WTC11 (cell line): ENCODE measurements at regions of chr20 and their contacts with region 1.

Region 1: GRCh38 chr20:40471261-40471629 is 217.8 kb downstream of the MAFB start:
- DNase-seq: peak; percentile 47
- ATAC-seq: peak; percentile 98
- H3K4me3 Mint-ChIP-seq: no peak overlapping the region
- H3K27ac Mint-ChIP-seq: no peak overlapping the region; the same call in 1 of the 2 replicates
- H3K4me1 Mint-ChIP-seq: peaks cover 25% of the 10 kb centered on the region
- H3K27me3 Mint-ChIP-seq: peaks cover 3% of the 10 kb centered on the region; the same call in 1 of the 2 replicates
- CTCF ChIP-seq: no peak

Region 2: DNA sequence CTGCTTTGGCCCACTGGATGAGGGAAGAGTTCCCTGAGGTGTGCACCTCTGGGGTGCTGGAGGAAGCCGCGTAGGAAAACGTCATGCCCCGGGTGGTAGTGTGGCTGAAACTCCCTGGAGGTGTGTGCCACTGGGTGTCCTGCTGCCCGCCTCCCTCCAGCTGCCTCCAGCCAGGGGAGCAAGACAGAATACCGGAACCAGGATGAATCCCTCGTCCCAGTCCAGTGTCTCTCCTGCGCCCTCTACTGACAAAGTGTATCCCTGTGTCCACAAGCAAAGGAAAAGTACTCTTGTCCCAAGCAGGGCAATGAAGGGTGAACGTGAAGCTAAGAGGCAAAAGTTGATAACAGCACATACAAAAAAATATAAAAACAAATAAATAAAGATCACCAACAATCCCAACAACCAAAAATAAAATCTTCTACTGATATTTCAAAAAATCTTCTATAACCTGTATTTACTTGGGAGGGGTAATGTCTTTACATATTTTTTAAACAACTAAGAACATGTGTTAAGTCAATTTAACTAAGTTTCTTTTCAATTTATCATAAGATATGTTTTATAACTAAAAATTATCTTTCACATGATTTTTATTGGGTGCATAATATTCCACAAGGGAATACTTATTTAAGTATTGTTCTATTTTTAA is 219.8 kb before region 1 on chr20:
- CTCF ChIA-PET with region 1: interaction called, 11 read pairs
- POLR2A ChIA-PET with region 1: no interaction called
- DNase-seq: peak; percentile 71
- ATAC-seq: peak; percentile 93
- H3K4me3 Mint-ChIP-seq: no peak overlapping the region
- H3K27ac Mint-ChIP-seq: no peak overlapping the region
- H3K4me1 Mint-ChIP-seq: peaks cover 15% of the 10 kb centered on the region
- H3K27me3 Mint-ChIP-seq: no peaks in the 10 kb centered on the region
- CTCF ChIP-seq: peak; percentile 68

Region 3: GRCh38 chr20:40265825-40266533 is 205.3 kb before region 1 on chr20:
- CTCF ChIA-PET with region 1: interaction called, 27 read pairs
- POLR2A ChIA-PET with region 1: no interaction called
- DNase-seq: peak; percentile 36
- ATAC-seq: peak; percentile 30
- H3K4me3 Mint-ChIP-seq: no peak overlapping the region
- H3K27ac Mint-ChIP-seq: no peak overlapping the region
- H3K4me1 Mint-ChIP-seq: peaks cover 68% of the 10 kb centered on the region
- H3K27me3 Mint-ChIP-seq: no peaks in the 10 kb centered on the region
- CTCF ChIP-seq: no peak

Region 4: GRCh38 chr20:40279390-40279789 is 191.9 kb before region 1 on chr20:
- CTCF ChIA-PET with region 1: interaction called, 20 read pairs
- POLR2A ChIA-PET with region 1: no interaction called
- DNase-seq: no peak
- ATAC-seq: peak; percentile 12
- H3K4me3 Mint-ChIP-seq: no peak overlapping the region
- H3K27ac Mint-ChIP-seq: peak overlapping the region; percentile 90
- H3K4me1 Mint-ChIP-seq: peaks cover 82% of the 10 kb centered on the region
- H3K27me3 Mint-ChIP-seq: no peaks in the 10 kb centered on the region
- CTCF ChIP-seq: no peak

Region 5: GRCh38 chr20:40286975-40287531 is 184.2 kb before region 1 on chr20:
- CTCF ChIA-PET with region 1: interaction called, 11 read pairs
- POLR2A ChIA-PET with region 1: no interaction called
- DNase-seq: no peak
- ATAC-seq: no peak
- H3K4me3 Mint-ChIP-seq: no peak overlapping the region
- H3K27ac Mint-ChIP-seq: peak overlapping the region; percentile 43; the same call in 1 of the 2 replicates
- H3K4me1 Mint-ChIP-seq: peaks cover 57% of the 10 kb centered on the region
- H3K27me3 Mint-ChIP-seq: no peaks in the 10 kb centered on the region
- CTCF ChIP-seq: no peak

Region 6: GRCh38 chr20:40442181-40442963 is 28.9 kb before region 1 on chr20:
- CTCF ChIA-PET with region 1: interaction called, 12 read pairs
- POLR2A ChIA-PET with region 1: no interaction called
- DNase-seq: peak; percentile 51
- ATAC-seq: peak; percentile 95
- H3K4me3 Mint-ChIP-seq: no peak overlapping the region
- H3K27ac Mint-ChIP-seq: no peak overlapping the region; the same call in 1 of the 2 replicates
- H3K4me1 Mint-ChIP-seq: peaks cover 34% of the 10 kb centered on the region
- H3K27me3 Mint-ChIP-seq: no peaks in the 10 kb centered on the region
- CTCF ChIP-seq: peak; percentile 14; the same call in 1 of the 2 replicates

Region 7: DNA sequence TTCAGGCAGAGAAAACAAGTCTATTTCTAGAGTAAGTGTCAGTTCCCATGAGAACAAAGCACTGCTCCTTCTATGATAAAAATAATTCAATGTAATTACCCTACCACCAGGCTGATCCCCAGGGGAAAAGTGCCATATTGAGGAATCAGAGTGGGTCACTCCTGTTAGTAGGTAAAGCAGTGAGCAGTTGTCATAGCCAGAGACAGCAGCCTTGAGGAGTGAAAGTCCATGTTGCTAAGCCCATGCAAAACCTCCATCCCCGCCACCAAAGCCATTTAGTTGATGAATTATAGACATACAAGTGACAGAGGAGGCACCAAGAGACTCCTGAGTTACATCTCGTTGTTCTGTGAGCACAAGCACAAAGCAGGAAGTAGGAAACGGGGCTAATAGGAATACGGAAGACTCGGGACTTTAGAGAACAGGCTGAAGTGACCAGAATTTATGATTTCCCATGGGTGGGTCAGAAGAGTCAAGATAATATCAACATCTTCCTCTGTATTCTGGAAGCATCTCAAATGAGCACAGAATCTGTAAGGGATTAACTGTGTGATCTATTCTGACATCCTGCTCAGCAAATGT is 19.9 kb after region 1 on chr20:
- CTCF ChIA-PET with region 1: no interaction called
- POLR2A ChIA-PET with region 1: no interaction called
- DNase-seq: no peak
- ATAC-seq: no peak
- H3K4me3 Mint-ChIP-seq: no peak overlapping the region
- H3K27ac Mint-ChIP-seq: no peak overlapping the region
- H3K4me1 Mint-ChIP-seq: peaks cover 4% of the 10 kb centered on the region
- H3K27me3 Mint-ChIP-seq: peaks cover 3% of the 10 kb centered on the region; the same call in 1 of the 2 replicates
- CTCF ChIP-seq: no peak